ENCODE measurements at regions of chr1 and their contacts with region 1.

Region 1: DNA sequence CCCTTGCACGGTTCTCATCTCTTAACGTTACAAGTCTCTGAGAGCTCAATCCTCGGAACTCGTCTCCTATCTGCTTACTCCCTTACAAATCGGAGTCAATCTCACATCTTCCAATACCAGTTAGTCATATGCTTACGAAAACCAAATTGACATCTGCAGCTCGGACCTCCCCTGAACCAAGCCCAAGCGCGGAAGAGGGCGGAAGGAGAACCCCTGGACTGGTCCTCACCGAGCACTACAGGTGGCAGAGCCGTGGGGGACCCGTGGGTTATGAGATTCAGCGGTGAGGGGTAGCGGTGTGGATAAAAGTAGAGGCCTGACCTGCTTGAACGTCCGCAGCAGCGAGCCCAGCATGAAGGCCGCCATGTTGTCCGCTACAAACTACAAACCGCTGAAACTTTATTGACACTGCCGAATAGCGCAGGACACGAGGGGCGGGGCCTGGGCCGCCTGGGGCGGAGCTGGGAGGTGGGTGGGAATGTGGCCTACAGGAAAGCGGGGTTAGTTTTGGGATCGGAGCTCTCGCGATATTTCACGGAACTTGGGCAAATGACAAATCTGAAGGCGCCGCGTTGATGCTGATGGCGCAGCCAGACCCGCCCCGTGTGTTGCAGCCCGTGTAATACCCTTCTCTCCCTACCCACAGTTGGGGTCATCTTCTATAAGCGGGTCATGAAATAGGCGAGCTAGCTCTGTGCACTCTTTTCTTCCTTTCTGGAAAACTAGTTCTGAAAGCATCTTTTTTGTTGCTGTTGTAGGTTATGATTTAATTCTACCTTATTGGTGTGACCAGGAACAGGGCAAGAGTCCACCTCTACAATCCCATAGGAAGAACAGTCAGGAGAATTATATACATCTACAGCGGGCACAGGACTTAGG is at the start of gene MRPS14:
- DNase-seq: peak; percentile 93 to 98 (median 97)
- ATAC-seq: peak; percentile 97
- H3K4me3 ChIP-seq: peak within 1 kb of the TSS; percentile 86
- H3K4me3 Mint-ChIP-seq: peak within 1 kb of the TSS; percentile 86 to 97 (median 92)
- H3K27ac ChIP-seq: peak within 1 kb of the TSS; percentile 92
- H3K27ac Mint-ChIP-seq: peak within 1 kb of the TSS; percentile 84 to 98 (median 90)
- H3K4me1 ChIP-seq: peaks cover 6 to 12% of the 10 kb centered on the region in 2 donors
- H3K4me1 Mint-ChIP-seq: peaks cover 23 to 47% (median 36%) of the 10 kb centered on the region in 7 donors
- H3K27me3 ChIP-seq: no peaks in the 10 kb centered on the region
- H3K27me3 Mint-ChIP-seq: no peaks in the 10 kb centered on the region
- total RNA-seq, gene MRPS14: 12.4 to 36.5 (median 31.5) TPM

Region 2: GRCh38 chr1:173824331-173825081 is 1198.8 kb before region 1 on chr1 and contains the starts of genes CENPL and DARS2:
- CTCF ChIA-PET with region 1: no interaction called
- POLR2A ChIA-PET with region 1: no interaction called
- intact Hi-C with region 1: loop called (anchors 1 kb)
- DNase-seq: peak; percentile 67 to 93 (median 91)
- ATAC-seq: peak; percentile 94
- H3K4me3 ChIP-seq: peak within 1 kb of the TSS; percentile 99
- H3K4me3 Mint-ChIP-seq: peak within 1 kb of the TSS; percentile 87 to 99 (median 94)
- H3K27ac ChIP-seq: peak within 1 kb of the TSS; percentile 80
- H3K27ac Mint-ChIP-seq: peak within 1 kb of the TSS; percentile 91 to 98 (median 96)
- H3K4me1 ChIP-seq: peaks cover 10 to 14% of the 10 kb centered on the region in 2 donors
- H3K4me1 Mint-ChIP-seq: peaks cover 32 to 68% (median 50%) of the 10 kb centered on the region in 7 donors
- H3K27me3 ChIP-seq: no peaks in the 10 kb centered on the region
- H3K27me3 Mint-ChIP-seq: no peaks in the 10 kb centered on the region
- total RNA-seq, gene CENPL: 5.2 to 25.1 (median 9.5) TPM
- total RNA-seq, gene DARS2: 3.6 to 26.0 (median 13.5) TPM

Region 3: DNA sequence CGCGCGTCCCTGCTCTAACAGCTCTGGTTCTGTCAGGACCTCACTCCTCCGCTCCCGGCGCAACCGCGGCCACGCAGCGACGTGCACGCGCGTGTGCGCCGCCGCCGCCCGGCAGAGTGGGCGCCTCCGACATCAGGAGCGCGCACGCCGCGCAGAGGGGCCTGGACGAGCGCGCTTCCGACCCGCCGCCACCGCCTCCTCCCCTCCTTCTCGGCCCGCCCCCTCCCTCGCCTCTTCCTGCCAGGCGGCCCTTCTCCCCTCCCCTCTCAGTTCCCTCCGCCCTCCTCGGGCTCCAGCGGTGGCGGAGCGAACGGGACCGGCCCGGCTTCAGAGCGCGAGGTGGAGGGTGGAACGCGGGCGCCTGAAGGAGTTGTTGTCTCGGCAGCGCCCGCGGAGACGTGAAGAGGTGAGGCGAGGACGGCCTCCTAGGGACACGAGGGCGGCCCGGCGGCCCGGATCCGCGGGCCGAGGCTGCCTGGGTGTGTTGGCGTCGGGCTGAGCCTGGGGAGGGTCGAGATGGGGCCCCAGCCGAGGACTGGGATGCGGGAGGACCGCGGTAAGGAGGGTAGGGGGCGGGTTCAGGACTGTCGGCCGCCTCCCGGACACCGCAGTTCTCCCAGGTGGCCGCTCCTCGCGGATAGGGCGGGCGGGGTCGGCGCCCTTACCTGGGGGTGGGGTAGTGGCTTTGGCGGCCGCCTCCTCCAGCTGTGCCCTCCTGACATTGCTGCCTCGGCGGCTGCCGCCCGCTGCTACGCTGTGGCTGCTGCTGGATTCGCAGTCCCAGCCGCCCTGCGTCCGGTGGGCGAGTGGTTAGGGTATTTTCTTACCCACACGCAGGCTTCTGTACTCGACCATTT is 863.8 kb before region 1 on chr1 and contains the start of gene RABGAP1L:
- CTCF ChIA-PET with region 1: no interaction called
- POLR2A ChIA-PET with region 1: interaction called, 4 read pairs
- intact Hi-C with region 1: loop called (anchors 1 kb)
- DNase-seq: peak; percentile 87 to 95 (median 93)
- ATAC-seq: peak; percentile 96
- H3K4me3 ChIP-seq: peak within 1 kb of the TSS; percentile 72
- H3K4me3 Mint-ChIP-seq: peak within 1 kb of the TSS; percentile 92 to 100 (median 96)
- H3K27ac ChIP-seq: peak within 1 kb of the TSS; percentile 87
- H3K27ac Mint-ChIP-seq: peak within 1 kb of the TSS; percentile 86 to 98 (median 98)
- H3K4me1 ChIP-seq: peaks cover 9 to 20% of the 10 kb centered on the region in 2 donors
- H3K4me1 Mint-ChIP-seq: peaks cover 31 to 59% (median 53%) of the 10 kb centered on the region in 7 donors
- H3K27me3 ChIP-seq: no peaks in the 10 kb centered on the region
- H3K27me3 Mint-ChIP-seq: no peaks in the 10 kb centered on the region
- total RNA-seq, gene RABGAP1L: 51.9 to 97.4 (median 74.3) TPM

Region 4: GRCh38 chr1:175005085-175005783 is 18.0 kb before region 1 on chr1:
- CTCF ChIA-PET with region 1: interaction called, 22 read pairs
- POLR2A ChIA-PET with region 1: interaction called, 185 read pairs
- intact Hi-C with region 1: no loop called
- DNase-seq: no peak
- ATAC-seq: no peak
- H3K4me3 ChIP-seq: no peak overlapping the region
- H3K4me3 Mint-ChIP-seq: no peak overlapping the region
- H3K27ac ChIP-seq: no peak overlapping the region
- H3K27ac Mint-ChIP-seq: peak overlapping the region in 6 of 9 donors; percentile 0 to 75 (median 24)
- H3K4me1 ChIP-seq: peaks cover 3 to 10% of the 10 kb centered on the region in 2 donors
- H3K4me1 Mint-ChIP-seq: peaks cover 42 to 65% (median 55%) of the 10 kb centered on the region in 7 donors
- H3K27me3 ChIP-seq: no peaks in the 10 kb centered on the region
- H3K27me3 Mint-ChIP-seq: no peaks in the 10 kb centered on the region

Region 5: GRCh38 chr1:175208773-175209492 is 185.7 kb after region 1 on chr1:
- CTCF ChIA-PET with region 1: no interaction called
- POLR2A ChIA-PET with region 1: interaction called, 3 read pairs
- intact Hi-C with region 1: loop called in 1 of 2 experiments (anchors 1 kb)
- DNase-seq: peak in 8 of 9 donors; percentile 36 to 85 (median 78)
- ATAC-seq: peak; percentile 94
- H3K4me3 ChIP-seq: peak overlapping the region; percentile 41
- H3K4me3 Mint-ChIP-seq: peak overlapping the region; percentile 71 to 96 (median 88)
- H3K27ac ChIP-seq: peak overlapping the region; percentile 62
- H3K27ac Mint-ChIP-seq: peak overlapping the region; percentile 86 to 99 (median 95)
- H3K4me1 ChIP-seq: peaks cover 55 to 70% of the 10 kb centered on the region in 2 donors
- H3K4me1 Mint-ChIP-seq: peaks cover 44 to 93% (median 76%) of the 10 kb centered on the region in 7 donors
- H3K27me3 ChIP-seq: no peaks in the 10 kb centered on the region
- H3K27me3 Mint-ChIP-seq: no peaks in the 10 kb centered on the region